OCI-LY7 (cell line): ENCODE measurements at regions of chr16 and their contacts with region 1.

Region 1: GRCh38 chr16:27179500-27180072 is 23.7 kb upstream of the KDM8 start:
- DNase-seq: peak; percentile 87
- H3K4me3 ChIP-seq: no peak overlapping the region
- H3K27ac ChIP-seq: no peak overlapping the region
- H3K4me1 ChIP-seq: peaks cover 33% of the 10 kb centered on the region
- CTCF ChIP-seq: peak; percentile 99

Region 2: GRCh38 chr16:26709175-26709574 is 470.4 kb before region 1 on chr16:
- CTCF ChIA-PET with region 1: no interaction called
- POLR2A ChIA-PET with region 1: no interaction called
- intact Hi-C with region 1: loop called (anchors 10 kb)
- DNase-seq: peak; percentile 83
- H3K4me3 ChIP-seq: no peak overlapping the region
- H3K27ac ChIP-seq: peak overlapping the region; percentile 32
- H3K4me1 ChIP-seq: peaks cover 75% of the 10 kb centered on the region
- CTCF ChIP-seq: 0 out of 2 replicates have a peak, but pooled peaks have one; percentile 35

Region 3: GRCh38 chr16:27203429-27204231 is 24.0 kb after region 1 on chr16 and contains the start of gene KDM8:
- CTCF ChIA-PET with region 1: interaction called, 7 read pairs
- POLR2A ChIA-PET with region 1: interaction called, 8 read pairs
- intact Hi-C with region 1: loop called (anchors 1 kb)
- DNase-seq: peak; percentile 100
- H3K4me3 ChIP-seq: peak within 1 kb of the TSS; percentile 81
- H3K27ac ChIP-seq: peak within 1 kb of the TSS; percentile 89
- H3K4me1 ChIP-seq: peaks cover 62% of the 10 kb centered on the region
- CTCF ChIP-seq: no peak
- total RNA-seq, gene KDM8: 12.4 and 14.2 TPM in 2 replicates

Region 4: GRCh38 chr16:27273670-27274423 is 94.3 kb after region 1 on chr16:
- CTCF ChIA-PET with region 1: no interaction called
- POLR2A ChIA-PET with region 1: interaction called, 3 read pairs
- intact Hi-C with region 1: loop called (anchors 1 kb)
- DNase-seq: no peak
- H3K4me3 ChIP-seq: peak overlapping the region; percentile 16
- H3K27ac ChIP-seq: peak overlapping the region; percentile 89
- H3K4me1 ChIP-seq: peaks cover 68% of the 10 kb centered on the region
- CTCF ChIP-seq: peak; percentile 38; the same call in 1 of the 2 replicates

Region 5: GRCh38 chr16:27313422-27314160 is 134.0 kb after region 1 on chr16 and contains the start of gene IL4R:
- CTCF ChIA-PET with region 1: interaction called, 4 read pairs
- POLR2A ChIA-PET with region 1: no interaction called
- intact Hi-C with region 1: loop called (anchors 5 kb)
- DNase-seq: peak; percentile 72
- H3K4me3 ChIP-seq: peak within 1 kb of the TSS; percentile 93
- H3K27ac ChIP-seq: peak within 1 kb of the TSS; percentile 30
- H3K4me1 ChIP-seq: peaks cover 54% of the 10 kb centered on the region
- CTCF ChIP-seq: no peak
- total RNA-seq, gene IL4R: 33.0 and 82.8 TPM in 2 replicates

Region 6: DNA sequence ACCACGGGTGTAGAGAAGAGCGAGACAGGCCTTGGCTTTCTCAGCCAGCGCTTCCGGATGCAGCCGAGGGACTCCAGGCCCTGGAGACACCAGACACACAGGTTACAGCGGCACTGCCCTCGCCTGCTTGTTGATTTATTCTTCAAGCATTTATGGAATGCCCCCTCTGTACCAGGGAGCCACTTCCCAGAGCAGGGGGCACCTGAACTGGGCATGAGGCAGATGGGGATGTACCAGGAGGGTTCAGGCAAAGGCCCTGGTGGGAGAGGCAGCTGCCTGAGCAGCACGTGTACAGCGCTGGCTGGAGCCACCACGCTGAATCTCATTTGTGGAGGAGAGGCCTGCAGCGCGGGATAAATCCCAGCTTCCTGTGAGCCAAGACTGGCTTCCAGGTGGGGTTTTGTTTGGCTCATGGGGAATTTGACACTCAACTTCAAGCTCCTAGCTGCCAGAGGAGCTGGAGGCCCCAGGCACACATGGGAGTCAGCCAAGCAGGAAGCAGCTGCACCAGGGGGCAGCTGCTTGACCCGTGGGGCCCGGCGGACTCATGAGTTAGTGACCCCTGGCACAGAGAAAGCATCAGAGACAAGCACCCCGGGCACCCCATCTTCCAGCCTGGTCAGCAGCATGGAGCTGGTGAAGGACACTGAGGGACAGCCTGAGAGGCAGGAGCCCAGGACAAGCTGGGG is 282.0 kb after region 1 on chr16:
- CTCF ChIA-PET with region 1: no interaction called
- POLR2A ChIA-PET with region 1: no interaction called
- intact Hi-C with region 1: loop called (anchors 1 kb)
- DNase-seq: no peak
- H3K4me3 ChIP-seq: no peak overlapping the region
- H3K27ac ChIP-seq: no peak overlapping the region
- H3K4me1 ChIP-seq: no peaks in the 10 kb centered on the region
- CTCF ChIP-seq: no peak